ENCODE measurements at regions of chr13 and their contacts with region 1.

Region 1: DNA sequence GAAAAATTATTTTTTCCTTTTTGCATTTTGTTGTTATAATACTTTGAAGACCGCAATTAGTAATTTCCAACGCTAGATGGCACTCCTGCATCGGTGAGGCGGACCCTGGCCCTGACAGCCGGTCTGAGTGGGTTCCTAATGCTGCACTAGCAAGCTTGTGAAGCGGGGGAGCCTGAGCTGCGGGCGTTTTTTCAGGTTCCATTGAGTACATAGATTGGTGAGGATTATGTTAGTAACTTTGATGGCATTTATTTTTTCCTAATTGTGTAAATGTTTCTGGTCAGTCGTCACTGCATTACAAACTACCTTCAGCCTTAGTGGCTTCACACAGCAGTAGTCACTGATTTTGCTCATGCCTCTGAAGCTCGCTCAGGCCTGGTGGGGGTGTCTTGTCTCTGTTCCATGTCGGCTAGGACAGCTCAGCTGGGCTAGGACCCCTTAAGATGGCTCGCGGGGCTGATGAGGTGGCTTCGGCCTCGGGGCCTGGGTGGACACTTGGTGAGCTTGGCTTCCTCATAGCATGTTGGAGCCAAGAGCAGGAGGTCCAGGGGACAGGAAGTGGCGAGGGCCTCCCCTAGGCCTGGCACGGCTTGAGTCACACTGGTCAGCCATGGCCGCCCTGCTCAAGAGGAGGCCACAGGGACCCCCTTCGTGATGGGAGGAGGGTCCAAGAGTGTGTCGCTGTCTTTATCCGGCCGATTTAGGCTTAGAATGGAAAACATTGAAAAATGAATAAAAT is 25.0 kb downstream of the ERCC5 start:
- DNase-seq: peak; percentile 57
- H3K4me3 Mint-ChIP-seq: no peak overlapping the region
- H3K27ac Mint-ChIP-seq: no peak overlapping the region
- H3K4me1 Mint-ChIP-seq: peaks cover 26% of the 10 kb centered on the region
- H3K27me3 Mint-ChIP-seq: no peaks in the 10 kb centered on the region

Region 2: DNA sequence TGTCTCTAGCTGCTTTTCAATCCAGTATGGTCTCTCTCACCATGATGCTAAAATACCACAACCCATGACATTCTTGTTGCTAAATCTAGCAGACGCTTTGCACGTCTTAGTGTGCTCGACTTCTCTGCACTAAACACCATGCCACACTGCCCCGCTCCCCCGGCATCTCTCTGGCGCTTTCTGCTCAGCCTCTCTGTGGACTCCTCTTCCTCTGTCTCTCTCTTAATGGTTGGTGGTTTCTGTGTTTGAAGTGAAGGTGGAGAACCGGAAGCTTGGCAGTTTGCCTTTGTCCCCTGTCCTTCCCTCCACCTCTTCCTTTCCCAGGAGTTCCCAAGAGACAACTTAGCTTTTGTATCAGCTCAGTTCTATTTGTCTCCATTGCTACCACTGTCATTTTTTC is 16.2 kb before region 1 on chr13:
- CTCF ChIA-PET with region 1: interaction called, 10 read pairs
- POLR2A ChIA-PET with region 1: no interaction called
- intact Hi-C with region 1: no loop called
- DNase-seq: no peak
- H3K4me3 Mint-ChIP-seq: no peak overlapping the region
- H3K27ac Mint-ChIP-seq: no peak overlapping the region
- H3K4me1 Mint-ChIP-seq: peaks cover 25% of the 10 kb centered on the region
- H3K27me3 Mint-ChIP-seq: no peaks in the 10 kb centered on the region

Region 3: DNA sequence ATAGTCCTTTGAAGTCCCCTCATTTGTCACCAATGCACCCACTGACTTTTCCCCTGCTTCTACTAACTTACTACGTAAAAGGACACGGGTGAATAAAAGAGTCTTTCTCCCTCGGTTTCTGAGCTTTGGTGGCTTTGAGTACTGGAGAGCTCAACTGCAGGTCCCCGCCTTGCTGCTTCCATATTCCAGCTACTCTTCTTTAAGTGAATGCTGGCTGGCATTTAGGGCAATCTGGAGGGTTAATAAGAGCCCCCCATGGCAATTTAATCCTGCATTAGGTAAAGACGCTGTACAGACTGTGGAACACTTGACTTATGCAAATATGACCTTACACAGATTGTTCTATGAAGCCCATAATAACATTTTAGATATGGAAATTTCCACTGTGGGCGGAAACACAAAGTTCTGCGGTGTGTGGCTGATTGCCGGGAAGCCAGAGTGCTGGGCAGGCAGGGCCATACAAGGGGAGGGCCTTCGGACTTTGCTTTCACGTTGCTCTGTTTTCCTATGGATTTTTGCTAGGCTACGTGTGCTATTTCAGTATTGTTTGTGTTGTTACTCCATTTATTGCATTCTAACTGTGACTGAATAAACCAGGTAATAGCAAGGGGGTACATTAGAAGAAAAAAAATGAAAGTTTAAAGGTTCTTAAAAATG is 97.9 kb after region 1 on chr13:
- CTCF ChIA-PET with region 1: no interaction called
- POLR2A ChIA-PET with region 1: no interaction called
- intact Hi-C with region 1: no loop called
- DNase-seq: no peak
- H3K4me3 Mint-ChIP-seq: no peak overlapping the region
- H3K27ac Mint-ChIP-seq: no peak overlapping the region
- H3K4me1 Mint-ChIP-seq: no peaks in the 10 kb centered on the region
- H3K27me3 Mint-ChIP-seq: peaks cover 2% of the 10 kb centered on the region

Measured in activated CD4-positive, alpha-beta memory T cell treated with anti-CD3 and anti-CD28 coated beads for 36 hours (primary cell).